OCI-LY7 (cell line): ENCODE measurements at regions of chr2 and their contacts with region 1.

Region 1: DNA sequence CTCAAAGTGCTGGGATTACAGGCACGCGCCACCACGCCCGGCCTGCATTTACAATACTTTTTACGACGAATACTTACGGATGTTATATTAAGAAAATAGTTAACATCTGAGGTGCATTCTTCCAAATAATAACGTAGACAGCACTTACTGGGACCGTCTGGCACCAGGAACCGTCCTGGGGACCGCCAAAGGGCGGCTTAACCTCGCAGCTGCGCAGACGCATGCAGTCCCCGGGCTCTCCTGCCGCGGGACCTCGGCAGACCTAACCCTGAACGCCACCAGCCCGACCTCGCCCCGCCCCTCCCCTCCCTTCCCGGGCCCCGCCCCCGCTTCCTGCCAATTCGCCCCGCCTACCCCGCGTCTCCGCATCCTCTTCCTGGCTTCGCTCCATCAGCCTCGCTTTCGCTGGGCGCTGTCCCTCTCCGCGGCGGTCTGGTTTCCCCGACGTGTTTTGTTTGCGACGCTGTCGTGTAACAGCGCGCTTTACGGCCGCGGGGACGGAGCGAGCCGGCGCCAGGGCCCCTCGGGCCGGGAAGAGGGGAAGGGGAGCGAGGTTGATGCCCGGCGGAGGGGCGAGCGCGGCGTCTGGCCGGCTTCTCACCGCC is at the start of gene CNOT11:
- DNase-seq: peak; percentile 99
- H3K4me3 ChIP-seq: peak within 1 kb of the TSS; percentile 96
- H3K27ac ChIP-seq: peak within 1 kb of the TSS; percentile 77
- H3K4me1 ChIP-seq: peaks cover 39% of the 10 kb centered on the region
- CTCF ChIP-seq: no peak
- total RNA-seq, gene CNOT11: 45.7 and 55.5 TPM in 2 replicates

Region 2: DNA sequence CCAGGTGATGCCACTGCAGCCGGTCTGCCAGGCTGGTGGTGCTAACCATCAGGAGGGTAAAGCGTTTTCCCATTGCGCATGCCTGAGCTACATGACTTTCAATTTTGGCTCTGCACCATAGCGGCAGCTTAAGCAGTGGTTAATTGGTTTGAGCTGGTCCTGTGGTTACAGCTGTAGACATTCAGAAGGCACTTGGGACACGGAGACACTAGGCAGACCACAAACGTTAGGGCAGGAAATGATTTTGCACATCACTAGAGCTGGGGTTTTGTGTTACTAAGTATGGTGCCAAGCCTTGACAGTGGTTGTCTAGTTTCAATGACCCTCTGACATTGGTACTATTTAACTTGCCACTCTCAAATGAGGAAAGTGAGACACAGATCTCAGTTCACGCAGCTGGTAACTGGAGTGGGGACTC is 28.7 kb before region 1 on chr2:
- CTCF ChIA-PET with region 1: interaction called, 9 read pairs
- POLR2A ChIA-PET with region 1: interaction called, 7 read pairs
- intact Hi-C with region 1: loop called (anchors 1 kb)
- DNase-seq: peak; percentile 95
- H3K4me3 ChIP-seq: peak overlapping the region; percentile 55
- H3K27ac ChIP-seq: peak overlapping the region; percentile 95
- H3K4me1 ChIP-seq: peaks cover 46% of the 10 kb centered on the region
- CTCF ChIP-seq: no peak

Region 3: DNA sequence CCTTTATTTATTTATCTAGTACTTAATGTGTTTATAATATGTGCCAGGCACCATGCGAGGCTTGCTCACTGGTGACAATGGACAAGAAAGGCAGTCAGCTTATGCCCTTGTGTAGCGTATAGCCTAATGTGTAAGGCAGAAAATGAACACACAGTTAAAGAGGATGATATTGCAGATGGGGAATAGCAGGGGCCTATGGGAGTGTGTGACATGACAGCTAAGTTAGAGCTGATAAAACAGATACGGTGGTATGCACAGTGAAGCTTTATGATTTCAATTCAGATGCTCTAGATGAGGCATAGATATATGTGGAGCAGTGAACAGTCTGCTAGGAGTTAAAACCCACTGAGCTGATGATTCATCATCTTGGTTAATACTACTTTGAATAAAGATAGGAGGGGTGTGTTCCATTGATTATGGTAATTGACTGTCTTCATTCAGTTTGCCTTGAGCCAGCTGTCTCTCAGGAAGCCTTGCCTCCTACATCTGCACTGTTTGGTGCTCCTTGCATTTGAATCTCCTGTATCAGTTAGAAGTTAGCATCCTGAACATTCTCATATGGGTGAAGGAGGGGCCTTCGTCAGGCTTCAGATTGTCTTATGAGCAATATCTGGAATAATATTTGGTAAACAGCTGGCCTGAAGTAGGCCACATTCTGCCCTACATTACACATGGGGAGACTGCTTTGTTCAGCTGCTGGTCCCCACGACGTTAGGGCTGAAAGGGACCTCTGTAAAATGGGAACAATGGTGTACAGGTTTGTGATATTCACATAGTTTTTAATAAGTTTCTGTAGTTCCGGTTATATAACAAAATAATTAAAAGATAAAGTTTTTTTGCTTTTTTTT is 458.2 kb after region 1 on chr2:
- CTCF ChIA-PET with region 1: no interaction called
- POLR2A ChIA-PET with region 1: no interaction called
- intact Hi-C with region 1: loop called (anchors 10 kb)
- DNase-seq: no peak
- H3K4me3 ChIP-seq: peak overlapping the region; percentile 56
- H3K27ac ChIP-seq: peak overlapping the region; percentile 82
- H3K4me1 ChIP-seq: peaks cover 96% of the 10 kb centered on the region
- CTCF ChIP-seq: no peak